Mammary epithelial cell (primary cell): ENCODE measurements at regions of chr12 and their contacts with region 1.

Region 1: DNA sequence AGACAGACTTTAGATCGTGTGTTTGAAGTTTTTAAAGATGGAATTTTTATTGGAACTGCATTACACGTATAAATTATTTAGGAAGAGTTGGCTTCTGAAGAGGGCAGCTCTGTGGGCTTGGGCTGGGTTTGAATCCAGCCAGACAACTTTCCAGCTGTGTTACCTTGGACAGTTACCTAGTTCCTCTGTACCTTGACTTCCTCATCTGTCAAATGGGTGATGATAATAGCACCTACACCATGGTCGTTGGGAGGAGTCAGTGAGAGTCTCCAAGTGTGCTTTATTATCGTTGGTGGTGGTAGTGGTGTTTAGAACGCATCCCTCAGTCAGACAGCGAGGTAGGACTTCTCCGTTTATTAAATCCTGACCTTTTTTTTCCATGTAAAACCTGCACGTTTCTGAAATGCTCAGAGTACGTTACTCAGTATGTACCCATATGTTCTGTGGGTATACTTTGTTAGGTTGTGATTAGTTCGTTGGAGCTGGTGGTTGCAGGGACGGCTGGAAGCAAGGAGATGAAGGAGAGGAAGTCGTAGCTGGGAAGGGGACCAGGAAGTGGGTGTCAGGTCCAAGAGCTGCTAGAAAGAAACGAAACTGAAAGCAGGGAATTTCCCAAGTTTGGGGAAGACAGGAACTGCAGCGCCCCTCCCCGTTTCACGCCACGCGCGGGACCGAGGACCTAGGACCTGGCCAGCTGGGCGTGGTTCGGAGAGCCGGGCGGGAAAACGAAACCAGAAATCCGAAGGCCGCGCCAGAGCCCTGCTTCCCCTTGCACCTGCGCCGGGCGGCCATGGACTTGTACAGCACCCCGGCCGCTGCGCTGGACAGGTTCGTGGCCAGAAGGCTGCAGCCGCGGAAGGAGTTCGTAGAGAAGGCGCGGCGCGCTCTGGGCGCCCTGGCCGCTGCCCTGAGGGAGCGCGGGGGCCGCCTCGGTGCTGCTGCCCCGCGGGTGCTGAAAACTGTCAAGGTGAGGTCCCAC is at the start of gene OAS3:
- DNase-seq: peak; percentile 79
- H3K4me3 ChIP-seq: peak within 1 kb of the TSS; percentile 60 to 85 (median 66)
- H3K27ac ChIP-seq: peak within 1 kb of the TSS; percentile 82
- H3K4me1 ChIP-seq: peaks cover 38% of the 10 kb centered on the region
- H3K27me3 ChIP-seq: no peaks in the 10 kb centered on the region
- CTCF ChIP-seq: no peak
- total RNA-seq, gene OAS3: 3.3 to 23.9 TPM

Region 2: GRCh38 chr12:112837629-112838197 is 100.3 kb before region 1 on chr12:
- CTCF ChIA-PET with region 1: no interaction called
- dilution Hi-C with region 1: loop called (anchors 5 kb)
- in situ Hi-C with region 1: no loop called
- intact Hi-C with region 1: loop called (anchors 5 kb)
- DNase-seq: peak; percentile 84
- H3K4me3 ChIP-seq: no peak overlapping the region
- H3K27ac ChIP-seq: peak overlapping the region; percentile 62
- H3K4me1 ChIP-seq: peaks cover 55% of the 10 kb centered on the region
- H3K27me3 ChIP-seq: no peaks in the 10 kb centered on the region
- CTCF ChIP-seq: no peak

Region 3: DNA sequence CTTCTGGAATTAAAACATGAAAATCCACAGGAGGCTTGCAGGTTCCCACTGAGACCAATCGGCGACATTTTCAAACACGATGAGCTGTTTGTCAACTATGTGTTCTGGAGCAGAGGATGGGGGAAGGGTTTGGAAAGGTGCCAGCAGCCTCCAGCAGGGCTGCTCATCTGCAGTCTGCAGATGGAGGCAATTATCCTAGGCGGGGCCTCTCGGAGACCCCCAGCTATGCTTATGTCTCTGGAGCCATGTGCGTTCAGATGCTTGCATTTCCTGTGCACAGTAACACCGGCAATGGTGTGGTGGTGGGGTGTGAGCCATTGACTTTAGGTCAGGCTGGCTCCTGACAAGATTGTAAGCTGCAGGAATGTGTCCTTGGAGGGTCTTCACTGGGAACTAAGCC is 94.7 kb before region 1 on chr12:
- CTCF ChIA-PET with region 1: no interaction called
- dilution Hi-C with region 1: loop called (anchors 5 kb)
- in situ Hi-C with region 1: no loop called
- intact Hi-C with region 1: loop called (anchors 5 kb)
- DNase-seq: no peak
- H3K4me3 ChIP-seq: no peak overlapping the region
- H3K27ac ChIP-seq: no peak overlapping the region
- H3K4me1 ChIP-seq: peaks cover 44% of the 10 kb centered on the region
- H3K27me3 ChIP-seq: no peaks in the 10 kb centered on the region
- CTCF ChIP-seq: no peak

Region 4: DNA sequence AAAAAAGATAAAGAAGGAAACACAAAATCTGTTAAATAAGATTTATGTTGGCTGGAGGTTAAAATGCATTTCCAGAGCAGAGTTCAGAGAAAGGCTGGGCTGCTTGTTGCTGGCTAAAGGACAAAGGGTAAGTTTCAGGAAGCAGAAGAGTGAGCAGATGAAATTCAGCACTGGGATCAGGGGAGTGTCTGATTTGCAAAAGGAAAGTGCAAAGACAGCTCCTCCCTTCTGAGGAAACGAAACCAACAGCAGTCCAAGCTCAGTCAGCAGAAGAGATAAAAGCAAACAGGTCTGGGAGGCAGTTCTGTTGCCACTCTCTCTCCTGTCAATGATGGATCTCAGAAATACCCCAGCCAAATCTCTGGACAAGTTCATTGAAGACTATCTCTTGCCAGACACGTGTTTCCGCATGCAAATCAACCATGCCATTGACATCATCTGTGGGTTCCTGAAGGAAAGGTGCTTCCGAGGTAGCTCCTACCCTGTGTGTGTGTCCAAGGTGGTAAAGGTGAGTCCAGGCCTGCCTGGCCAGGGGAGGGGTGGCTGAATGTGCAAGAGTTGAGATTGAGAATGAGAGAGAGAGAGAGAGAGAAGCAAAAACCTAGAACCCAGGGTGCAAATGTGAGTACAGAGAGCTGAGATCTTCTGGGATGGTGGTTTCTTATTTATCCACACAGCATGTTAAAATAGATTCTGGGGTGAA is 31.2 kb before region 1 on chr12 and contains the start of gene OAS1:
- CTCF ChIA-PET with region 1: no interaction called
- dilution Hi-C with region 1: no loop called
- in situ Hi-C with region 1: no loop called
- intact Hi-C with region 1: loop called (anchors 2 kb)
- DNase-seq: peak; percentile 61
- H3K4me3 ChIP-seq: peak within 1 kb of the TSS; percentile 0 to 47 (median 32)
- H3K27ac ChIP-seq: no peak within 1 kb of the TSS
- H3K4me1 ChIP-seq: peaks cover 4% of the 10 kb centered on the region
- H3K27me3 ChIP-seq: no peaks in the 10 kb centered on the region
- CTCF ChIP-seq: no peak
- total RNA-seq, gene OAS1: 4.0 to 4.2 TPM

Region 5: DNA sequence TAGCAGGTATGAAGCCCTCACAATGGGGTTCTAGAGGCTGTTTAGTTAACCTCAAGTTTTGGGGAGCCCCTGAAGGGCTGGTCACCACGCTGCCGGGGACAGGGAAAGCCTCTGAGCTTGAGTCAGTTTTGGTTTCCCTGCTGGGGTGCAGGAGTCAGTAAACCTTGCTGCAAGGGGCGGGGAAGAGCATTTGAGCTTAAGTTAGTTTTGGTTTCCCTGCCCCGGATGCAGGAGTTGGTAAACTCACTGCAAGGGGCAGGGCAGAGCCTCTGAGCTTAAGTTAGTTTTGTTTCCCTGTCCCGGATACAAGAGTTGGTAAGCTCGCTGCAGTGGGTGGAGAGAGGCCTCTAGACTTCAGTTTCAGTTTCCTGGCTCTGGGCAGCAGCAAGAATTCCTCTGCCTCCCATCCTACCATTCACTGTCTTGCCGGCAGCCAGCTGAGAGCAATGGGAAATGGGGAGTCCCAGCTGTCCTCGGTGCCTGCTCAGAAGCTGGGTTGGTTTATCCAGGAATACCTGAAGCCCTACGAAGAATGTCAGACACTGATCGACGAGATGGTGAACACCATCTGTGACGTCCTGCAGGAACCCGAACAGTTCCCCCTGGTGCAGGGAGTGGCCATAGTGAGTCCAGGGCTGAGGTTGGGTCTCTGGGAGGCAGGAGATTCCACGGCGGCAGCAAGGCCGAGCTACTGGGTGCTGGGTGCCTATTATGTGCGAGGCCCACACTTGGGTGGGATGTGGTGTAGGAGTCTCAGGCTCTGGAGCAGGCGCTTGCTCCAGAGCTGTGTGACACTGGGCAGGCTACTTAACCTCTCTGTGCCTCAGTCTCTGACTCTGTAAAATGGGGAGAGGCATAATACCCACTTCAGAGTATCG is 40.4 kb after region 1 on chr12 and contains the start of gene OAS2:
- CTCF ChIA-PET with region 1: no interaction called
- dilution Hi-C with region 1: no loop called
- in situ Hi-C with region 1: no loop called
- intact Hi-C with region 1: loop called (anchors 5 kb)
- DNase-seq: peak; percentile 71
- H3K4me3 ChIP-seq: peak within 1 kb of the TSS; percentile 10 to 34 (median 13)
- H3K27ac ChIP-seq: no peak within 1 kb of the TSS
- H3K4me1 ChIP-seq: peaks cover 7% of the 10 kb centered on the region
- H3K27me3 ChIP-seq: no peaks in the 10 kb centered on the region
- CTCF ChIP-seq: no peak
- total RNA-seq, gene OAS2: 0.83 to 4.8 TPM